MCF 10A (cell line): ENCODE measurements at regions of chr11 and their contacts with region 1.

Region 1: GRCh38 chr11:33808228-33808828 is 34.0 kb upstream of the FBXO3 start:
- DNase-seq: peak; percentile 81
- H3K4me3 Mint-ChIP-seq: no peak overlapping the region
- H3K27ac Mint-ChIP-seq: no peak overlapping the region
- H3K4me1 Mint-ChIP-seq: no peaks in the 10 kb centered on the region
- H3K27me3 Mint-ChIP-seq: peaks cover 13% of the 10 kb centered on the region
- CTCF ChIP-seq: peak; percentile 85

Region 2: DNA sequence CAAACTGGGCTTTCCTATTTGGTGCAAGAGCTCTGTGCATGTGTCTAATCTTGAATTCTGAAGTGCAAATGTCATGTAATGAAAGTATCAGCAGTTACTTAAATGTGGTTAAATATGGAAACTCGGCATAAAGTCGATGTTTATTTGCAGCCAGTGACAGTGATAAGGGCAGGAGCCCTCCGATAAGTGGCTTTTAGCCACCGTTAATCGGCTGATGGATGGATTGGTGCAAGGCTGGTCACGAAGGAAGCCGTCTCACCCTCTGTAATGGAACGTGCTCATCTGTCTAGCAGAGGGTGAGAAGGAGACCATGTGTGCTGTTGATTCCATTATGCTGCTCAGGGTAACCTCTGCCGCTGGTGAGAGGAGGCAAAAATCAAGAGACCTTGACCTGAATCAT is 1875.4 kb before region 1 on chr11:
- CTCF ChIA-PET with region 1: no interaction called
- POLR2A ChIA-PET with region 1: no interaction called
- intact Hi-C with region 1: no loop called
- DNase-seq: no peak
- H3K4me3 Mint-ChIP-seq: no peak overlapping the region
- H3K27ac Mint-ChIP-seq: no peak overlapping the region
- H3K4me1 Mint-ChIP-seq: no peaks in the 10 kb centered on the region
- H3K27me3 Mint-ChIP-seq: peaks cover 38% of the 10 kb centered on the region
- CTCF ChIP-seq: no peak

Region 3: GRCh38 chr11:33790040-33790439 is 18.3 kb before region 1 on chr11:
- CTCF ChIA-PET with region 1: interaction called, 38 read pairs
- POLR2A ChIA-PET with region 1: no interaction called
- intact Hi-C with region 1: no loop called
- DNase-seq: no peak
- H3K4me3 Mint-ChIP-seq: no peak overlapping the region
- H3K27ac Mint-ChIP-seq: no peak overlapping the region
- H3K4me1 Mint-ChIP-seq: no peaks in the 10 kb centered on the region
- H3K27me3 Mint-ChIP-seq: peaks cover 77% of the 10 kb centered on the region
- CTCF ChIP-seq: no peak

Region 4: GRCh38 chr11:33829433-33830141 is 21.3 kb after region 1 on chr11:
- CTCF ChIA-PET with region 1: interaction called, 202 read pairs
- POLR2A ChIA-PET with region 1: interaction called, 6 read pairs
- intact Hi-C with region 1: loop called (anchors 1 kb)
- DNase-seq: peak; percentile 77
- H3K4me3 Mint-ChIP-seq: peak overlapping the region; percentile 62
- H3K27ac Mint-ChIP-seq: peak overlapping the region; percentile 42
- H3K4me1 Mint-ChIP-seq: peaks cover 6% of the 10 kb centered on the region
- H3K27me3 Mint-ChIP-seq: peaks cover 15% of the 10 kb centered on the region
- CTCF ChIP-seq: peak; percentile 82

Region 5: GRCh38 chr11:33842236-33842915 is 34.0 kb after region 1 on chr11:
- CTCF ChIA-PET with region 1: interaction called, 11 read pairs
- POLR2A ChIA-PET with region 1: no interaction called
- intact Hi-C with region 1: no loop called
- DNase-seq: no peak
- H3K4me3 Mint-ChIP-seq: no peak overlapping the region
- H3K27ac Mint-ChIP-seq: no peak overlapping the region
- H3K4me1 Mint-ChIP-seq: no peaks in the 10 kb centered on the region
- H3K27me3 Mint-ChIP-seq: peaks cover 81% of the 10 kb centered on the region
- CTCF ChIP-seq: no peak

Region 6: GRCh38 chr11:33987975-33988580 is 179.8 kb after region 1 on chr11:
- CTCF ChIA-PET with region 1: interaction called, 12 read pairs
- POLR2A ChIA-PET with region 1: no interaction called
- intact Hi-C with region 1: no loop called
- DNase-seq: peak; percentile 78
- H3K4me3 Mint-ChIP-seq: no peak overlapping the region
- H3K27ac Mint-ChIP-seq: no peak overlapping the region
- H3K4me1 Mint-ChIP-seq: no peaks in the 10 kb centered on the region
- H3K27me3 Mint-ChIP-seq: no peaks in the 10 kb centered on the region
- CTCF ChIP-seq: peak; percentile 62